Activated CD4-positive, alpha-beta memory T cell treated with anti-CD3 and anti-CD28 coated beads, Interleukin-2, amount 10 ng/mL, durations not matched to agents 7 days and 5 days (primary cell): ENCODE measurements at regions of chr2 and their contacts with region 1.

Region 1: GRCh38 chr2:27322766-27323595 is at the start of gene MPV17:
- DNase-seq: peak; percentile 91
- H3K4me3 Mint-ChIP-seq: peak within 1 kb of the TSS; percentile 97
- H3K27ac Mint-ChIP-seq: peak within 1 kb of the TSS; percentile 79
- H3K4me1 Mint-ChIP-seq: peaks cover 22% of the 10 kb centered on the region
- H3K27me3 Mint-ChIP-seq: no peaks in the 10 kb centered on the region
- total RNA-seq, gene MPV17: 83.3 to 83.9 TPM

Region 2: DNA sequence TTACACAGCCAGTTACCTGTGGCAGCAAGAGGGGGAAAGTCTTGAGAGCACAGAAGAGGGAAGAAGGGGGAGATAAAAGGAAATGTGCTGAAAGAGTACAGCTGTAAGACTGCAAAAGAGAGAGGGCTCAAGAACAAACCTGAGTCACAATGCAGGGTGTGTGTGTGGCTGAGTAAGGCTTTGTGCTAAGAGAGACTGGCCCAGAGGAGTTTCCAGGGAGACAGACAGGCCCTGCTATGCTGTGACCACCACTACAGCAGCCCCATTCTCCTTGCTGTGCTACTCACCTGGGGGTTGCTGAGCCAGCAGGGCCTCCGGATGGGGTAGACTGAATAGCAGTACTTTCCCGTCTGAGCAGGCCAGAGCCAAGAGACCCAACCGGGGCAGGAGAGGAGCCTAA is 12.3 kb after region 1 on chr2:
- CTCF ChIA-PET with region 1: no interaction called
- POLR2A ChIA-PET with region 1: interaction called, 14 read pairs
- DNase-seq: no peak
- H3K4me3 Mint-ChIP-seq: no peak overlapping the region
- H3K27ac Mint-ChIP-seq: no peak overlapping the region
- H3K4me1 Mint-ChIP-seq: no peaks in the 10 kb centered on the region
- H3K27me3 Mint-ChIP-seq: no peaks in the 10 kb centered on the region

Region 3: DNA sequence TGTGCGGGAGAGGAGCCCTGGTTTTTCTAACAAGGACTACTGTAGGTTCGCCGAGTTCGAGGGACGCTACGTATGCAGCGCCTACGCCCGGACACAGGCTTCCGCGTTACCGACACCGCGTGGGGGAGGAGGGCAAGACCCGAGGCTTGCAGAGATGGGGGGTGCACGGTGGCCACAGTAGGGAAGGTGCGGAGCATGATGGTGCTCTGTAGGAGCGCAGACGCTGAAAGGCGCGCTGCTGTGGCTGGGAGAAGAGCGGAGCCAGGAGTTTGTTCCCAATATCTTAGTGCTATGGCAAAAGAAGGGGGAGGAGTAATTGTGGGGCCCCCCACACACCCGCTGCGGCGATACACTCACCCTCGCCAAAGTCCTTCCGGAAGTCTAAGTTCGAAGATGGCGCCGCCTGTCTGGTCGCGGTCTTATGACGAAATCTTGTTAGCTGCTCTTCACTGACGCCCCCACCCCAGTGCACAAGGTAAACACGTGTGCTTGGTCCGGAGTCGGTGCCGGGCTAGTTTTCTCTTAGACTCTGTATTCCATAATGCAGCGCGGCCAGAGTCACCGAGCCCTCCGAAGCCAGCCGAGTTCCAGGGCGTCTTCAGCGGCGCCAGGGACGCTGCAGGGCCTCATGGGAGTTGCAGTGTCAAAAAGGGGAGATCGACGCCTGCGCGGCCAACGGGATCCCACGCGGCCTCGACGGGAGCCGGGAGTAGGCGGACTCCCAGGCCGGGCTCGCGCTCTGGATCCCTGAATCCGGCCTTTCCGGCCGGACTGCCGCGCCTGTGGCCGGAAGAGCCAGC is 33.6 kb after region 1 on chr2 and contains the start of gene GTF3C2:
- CTCF ChIA-PET with region 1: no interaction called
- POLR2A ChIA-PET with region 1: interaction called, 22 read pairs
- DNase-seq: peak; percentile 93
- H3K4me3 Mint-ChIP-seq: peak within 1 kb of the TSS; percentile 95
- H3K27ac Mint-ChIP-seq: peak within 1 kb of the TSS; percentile 97
- H3K4me1 Mint-ChIP-seq: peaks cover 50% of the 10 kb centered on the region
- H3K27me3 Mint-ChIP-seq: no peaks in the 10 kb centered on the region
- total RNA-seq, gene GTF3C2: 49.0 to 49.1 TPM

Region 4: GRCh38 chr2:27370026-27370815 is 47.2 kb after region 1 on chr2 and contains the starts of genes EIF2B4 and SNX17:
- CTCF ChIA-PET with region 1: interaction called, 15 read pairs
- POLR2A ChIA-PET with region 1: interaction called, 16 read pairs
- DNase-seq: peak; percentile 100
- H3K4me3 Mint-ChIP-seq: peak within 1 kb of the TSS; percentile 88
- H3K27ac Mint-ChIP-seq: peak within 1 kb of the TSS; percentile 93
- H3K4me1 Mint-ChIP-seq: peaks cover 45% of the 10 kb centered on the region
- H3K27me3 Mint-ChIP-seq: no peaks in the 10 kb centered on the region
- total RNA-seq, gene EIF2B4: 34.1 to 36.9 TPM
- total RNA-seq, gene SNX17: 116 to 123 TPM

Region 5: DNA sequence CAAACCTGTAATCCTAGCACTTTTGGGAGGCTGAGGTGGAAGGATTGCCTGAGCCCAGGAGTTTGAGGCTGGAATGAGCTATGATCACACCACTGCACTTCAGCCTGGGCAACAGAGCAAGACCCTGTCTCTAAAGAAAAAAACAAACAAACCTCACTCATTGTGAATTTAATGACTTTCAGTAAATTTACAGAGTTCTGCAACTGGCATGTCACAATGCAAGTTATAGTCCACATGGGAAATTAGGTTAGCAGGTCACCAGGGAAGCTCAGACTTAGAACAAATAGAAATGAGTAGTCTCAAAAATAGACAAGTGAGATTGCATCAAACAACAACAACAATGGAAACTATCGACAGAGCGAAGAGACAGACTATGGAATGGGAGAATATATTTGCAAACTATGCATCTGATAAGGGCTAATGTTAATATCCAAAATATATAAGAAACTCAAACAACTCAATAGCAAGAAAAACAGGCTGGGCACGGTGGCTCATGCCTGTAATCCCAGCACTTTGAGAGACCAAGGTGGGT is 98.8 kb after region 1 on chr2:
- CTCF ChIA-PET with region 1: no interaction called
- POLR2A ChIA-PET with region 1: no interaction called
- DNase-seq: no peak
- H3K4me3 Mint-ChIP-seq: no peak overlapping the region
- H3K27ac Mint-ChIP-seq: no peak overlapping the region
- H3K4me1 Mint-ChIP-seq: peaks cover 2% of the 10 kb centered on the region
- H3K27me3 Mint-ChIP-seq: peaks cover 2% of the 10 kb centered on the region